CD14-positive monocyte (primary cell): ENCODE measurements at regions of chr12 and their contacts with region 1.

Region 1: DNA sequence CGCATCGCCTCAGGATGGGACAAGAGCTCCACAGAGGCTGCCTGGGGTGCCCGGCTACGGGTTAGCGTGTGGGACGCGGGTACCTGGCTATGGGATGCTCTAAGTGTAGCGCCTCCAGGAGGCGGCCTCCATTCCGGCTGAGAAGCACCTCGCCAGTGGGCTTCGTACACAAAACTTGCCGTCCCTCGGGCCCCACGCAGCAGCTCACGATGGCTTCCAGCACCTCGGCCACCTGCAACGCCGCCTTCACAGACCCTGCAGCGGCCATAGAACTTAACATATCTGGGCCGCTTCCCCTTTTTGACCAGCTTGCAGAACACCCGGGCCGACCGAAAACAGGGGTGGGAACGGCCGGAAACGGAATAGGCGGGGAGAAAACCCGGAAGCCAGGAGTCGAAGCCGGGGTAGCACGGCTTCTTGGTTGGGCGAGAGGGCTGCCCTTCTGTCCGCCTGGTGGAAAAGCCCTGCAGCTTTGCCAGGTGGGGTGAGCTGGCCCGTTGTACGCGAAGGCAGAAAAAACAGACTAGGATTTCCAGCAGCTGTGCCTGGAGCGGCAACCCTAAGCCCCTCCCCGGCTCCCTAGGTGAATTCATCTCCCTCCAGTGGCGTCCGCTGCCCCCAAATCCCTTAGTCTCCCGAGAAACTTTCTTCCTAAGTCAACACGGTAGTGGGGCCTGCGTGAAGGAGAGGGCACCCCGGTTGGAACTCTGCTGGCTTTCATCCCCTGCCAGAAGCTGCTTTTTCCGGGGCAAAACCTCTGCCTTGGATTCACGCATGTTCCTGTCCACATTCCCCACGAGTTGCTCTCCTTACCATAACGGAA is at the start of gene BBS10:
- DNase-seq: peak; percentile 90 to 92 (median 91)
- H3K4me3 ChIP-seq: peak within 1 kb of the TSS; percentile 66 to 86 (median 73)
- H3K4me3 Mint-ChIP-seq: peak within 1 kb of the TSS; percentile 89 to 93
- H3K27ac ChIP-seq: peak within 1 kb of the TSS; percentile 87
- H3K27ac Mint-ChIP-seq: peak within 1 kb of the TSS; percentile 85 to 93 (median 91)
- H3K4me1 ChIP-seq: peaks cover 14 to 22% of the 10 kb centered on the region in 2 donors
- H3K4me1 Mint-ChIP-seq: peaks cover 24% of the 10 kb centered on the region
- H3K27me3 ChIP-seq: no peaks in the 10 kb centered on the region
- H3K27me3 Mint-ChIP-seq: peaks cover 0 to 4% (median 0%) of the 10 kb centered on the region in 3 donors
- CTCF ChIP-seq: peak; percentile 12
- polyA plus RNA-seq, gene BBS10: 1.4 to 2.6 (median 1.8) TPM

Region 2: GRCh38 chr12:76083904-76084862 is 264.1 kb before region 1 on chr12 and contains the start of gene NAP1L1:
- intact Hi-C with region 1: loop called in 1 of 2 experiments (anchors 10 kb)
- DNase-seq: peak; percentile 93 to 96 (median 94)
- H3K4me3 ChIP-seq: peak within 1 kb of the TSS; percentile 69 to 82 (median 72)
- H3K4me3 Mint-ChIP-seq: peak within 1 kb of the TSS; percentile 92 to 93
- H3K27ac ChIP-seq: peak within 1 kb of the TSS; percentile 87 to 97
- H3K27ac Mint-ChIP-seq: peak within 1 kb of the TSS; percentile 93 to 98 (median 97)
- H3K4me1 ChIP-seq: peaks cover 24 to 36% of the 10 kb centered on the region in 2 donors
- H3K4me1 Mint-ChIP-seq: peaks cover 32% of the 10 kb centered on the region
- H3K27me3 ChIP-seq: no peaks in the 10 kb centered on the region
- H3K27me3 Mint-ChIP-seq: peaks cover 0 to 2% (median 0%) of the 10 kb centered on the region in 3 donors
- CTCF ChIP-seq: peak; percentile 8
- polyA plus RNA-seq, gene NAP1L1: 98.3 to 164 (median 111) TPM

Region 3: DNA sequence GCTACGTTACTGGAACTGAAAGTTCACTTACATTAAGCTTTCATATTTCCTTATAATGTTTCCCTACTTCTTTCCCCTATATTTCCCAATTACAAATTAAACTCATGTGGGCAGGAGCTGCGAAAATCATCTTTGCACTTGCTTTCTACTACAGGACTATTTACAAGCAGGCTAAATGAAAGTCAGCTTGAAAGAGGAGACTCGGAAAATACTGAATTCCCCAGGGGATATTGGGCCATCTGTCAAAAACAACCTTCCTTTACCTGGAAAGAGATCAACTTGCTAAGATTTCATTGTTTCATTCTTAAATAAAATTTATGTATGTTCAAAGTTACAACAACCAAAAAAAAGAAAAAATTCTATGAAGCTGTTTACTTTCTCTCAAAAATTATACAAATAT is 92.7 kb after region 1 on chr12:
- intact Hi-C with region 1: no loop called
- DNase-seq: no peak
- H3K4me3 ChIP-seq: no peak overlapping the region
- H3K4me3 Mint-ChIP-seq: no peak overlapping the region
- H3K27ac ChIP-seq: no peak overlapping the region
- H3K27ac Mint-ChIP-seq: no peak overlapping the region
- H3K4me1 ChIP-seq: no peaks in the 10 kb centered on the region
- H3K4me1 Mint-ChIP-seq: no peaks in the 10 kb centered on the region
- H3K27me3 ChIP-seq: no peaks in the 10 kb centered on the region
- H3K27me3 Mint-ChIP-seq: no peaks in the 10 kb centered on the region
- CTCF ChIP-seq: no peak

Region 4: DNA sequence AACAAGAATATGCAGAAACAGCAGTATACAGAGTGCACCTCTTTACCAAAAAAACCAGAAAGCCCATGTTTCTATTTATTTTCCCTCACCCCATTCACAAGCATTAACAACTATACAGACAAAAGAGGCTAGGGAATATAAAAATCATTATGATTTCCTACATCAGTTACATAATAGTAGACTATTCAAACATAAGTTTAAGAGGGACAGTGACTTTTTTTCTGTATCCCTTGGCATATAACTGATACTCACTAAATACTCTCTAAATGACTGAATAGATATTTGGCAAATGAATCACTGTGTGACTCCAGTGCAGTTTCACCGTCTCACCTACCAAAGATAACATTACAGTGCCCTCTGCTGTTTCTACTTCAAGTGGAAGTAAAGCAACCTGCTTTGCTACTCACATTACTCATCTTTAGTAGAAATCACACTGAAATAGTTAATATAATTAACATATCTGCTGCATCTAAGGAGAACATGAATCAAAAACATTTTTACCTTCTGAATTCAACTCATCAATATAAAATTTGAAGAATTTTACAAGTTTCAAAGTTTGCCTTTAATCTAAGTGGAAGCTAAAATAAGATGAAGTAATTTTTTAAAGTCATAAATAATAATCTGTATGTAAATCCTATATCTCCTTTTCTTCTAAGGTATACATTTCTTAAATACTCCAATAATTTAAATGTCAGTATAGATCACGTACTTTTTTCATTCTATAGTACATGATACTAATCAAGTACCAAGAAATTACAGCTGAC is 107.5 kb after region 1 on chr12:
- intact Hi-C with region 1: loop called in 1 of 2 experiments (anchors 10 kb)
- DNase-seq: peak in 2 of 3 donors; percentile 14 to 36
- H3K4me3 ChIP-seq: no peak overlapping the region
- H3K4me3 Mint-ChIP-seq: no peak overlapping the region
- H3K27ac ChIP-seq: no peak overlapping the region
- H3K27ac Mint-ChIP-seq: peak overlapping the region in 1 of 7 donors; percentile 74
- H3K4me1 ChIP-seq: peaks cover under 1 to 5% of the 10 kb centered on the region in 2 donors
- H3K4me1 Mint-ChIP-seq: peaks cover 3% of the 10 kb centered on the region
- H3K27me3 ChIP-seq: no peaks in the 10 kb centered on the region
- H3K27me3 Mint-ChIP-seq: no peaks in the 10 kb centered on the region
- CTCF ChIP-seq: peak; percentile 53